ENCODE measurements at regions of chr6 and their contacts with region 1.

Region 1: DNA sequence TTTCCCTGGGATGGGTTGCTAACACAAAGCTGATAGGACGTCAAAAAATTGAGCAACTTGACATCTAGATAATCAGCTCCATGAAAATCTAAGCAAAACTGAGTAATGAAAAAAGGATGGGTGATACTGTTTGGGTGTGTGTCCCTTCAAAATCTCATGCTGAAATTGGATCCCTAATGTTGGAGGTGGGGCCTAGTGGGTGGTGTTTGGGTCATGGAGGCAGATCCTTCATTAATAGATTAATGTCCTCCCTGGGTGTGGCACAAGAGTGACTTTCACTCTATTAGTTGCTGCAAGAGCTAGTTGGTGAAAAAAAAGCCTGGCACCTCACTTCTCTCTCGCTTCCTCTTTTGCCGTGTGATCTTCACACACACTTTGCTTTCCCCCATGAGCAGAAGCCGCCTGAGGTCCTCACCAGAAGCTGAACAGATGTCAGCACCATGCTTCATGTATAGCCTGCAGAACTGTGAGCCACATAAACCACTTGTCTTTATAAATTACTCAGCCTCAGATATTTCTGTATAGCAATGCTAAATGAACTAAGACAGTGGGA is 160.9 kb downstream of the FRK start:
- DNase-seq: no peak
- CTCF ChIP-seq: no peak

Region 2: GRCh38 chr6:114747987-114748630 is 1151.7 kb before region 1 on chr6:
- in situ Hi-C with region 1: loop called (anchors 25 kb)
- DNase-seq: peak; percentile 4
- CTCF ChIP-seq: peak; percentile 81

Region 3: DNA sequence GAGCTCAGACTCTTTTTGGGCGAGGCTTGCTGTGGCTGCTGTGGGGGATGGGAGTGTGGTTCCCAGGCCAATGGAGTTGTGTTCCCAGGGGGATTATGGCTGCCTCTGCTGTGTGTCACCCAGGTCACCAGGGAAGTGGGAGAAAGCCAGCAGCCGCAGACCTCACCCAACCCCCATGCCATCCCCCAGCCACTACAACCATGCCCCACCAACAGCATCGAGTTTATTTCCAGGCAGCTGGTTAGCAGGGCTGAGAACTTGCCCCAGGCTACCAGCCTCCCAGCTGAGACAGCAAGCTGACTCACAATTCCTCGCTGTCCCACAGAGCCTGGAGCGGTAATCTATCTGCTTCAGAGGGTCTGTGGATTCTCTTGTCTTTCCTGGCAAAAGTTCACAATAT is 170.8 kb before region 1 on chr6:
- in situ Hi-C with region 1: no loop called
- DNase-seq: no peak
- CTCF ChIP-seq: no peak